A549 (cell line): ENCODE measurements at regions of chr2 and their contacts with region 1.

Region 1: DNA sequence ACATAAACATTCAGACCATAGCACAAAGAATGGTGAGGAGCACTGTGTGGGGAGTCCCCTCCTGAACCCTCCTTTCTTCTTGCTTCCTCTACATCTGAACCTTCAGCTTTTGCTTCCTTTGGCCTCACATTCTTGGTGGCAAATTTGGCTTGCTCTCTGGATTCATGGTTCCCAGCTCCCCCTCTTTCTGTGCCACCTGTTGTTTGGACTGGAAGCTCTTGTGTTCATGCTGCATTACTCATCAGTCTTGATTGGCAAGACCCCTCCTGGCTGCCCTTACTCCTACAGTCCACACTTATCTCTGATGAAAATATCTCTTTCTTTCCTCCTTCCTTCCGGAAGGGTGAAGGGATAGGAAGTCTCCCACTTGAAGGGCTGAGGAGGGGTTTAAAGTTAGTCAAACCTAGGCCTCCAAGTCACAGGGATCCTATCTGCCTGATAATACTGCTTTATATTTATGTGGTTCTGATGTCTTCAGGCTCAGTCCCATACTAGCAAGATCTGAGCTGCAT is 70.0 kb downstream of the MYO3B start:
- DNase-seq: no peak
- ATAC-seq: no peak
- H3K4me3 ChIP-seq: no peak overlapping the region
- H3K27ac ChIP-seq: no peak overlapping the region
- H3K4me1 ChIP-seq: no peaks in the 10 kb centered on the region
- CTCF ChIP-seq: no peak
- EP300 ChIP-seq: no peak
- POLR2A ChIP-seq: no peak
- RAD21 ChIP-seq: no peak

Region 2: DNA sequence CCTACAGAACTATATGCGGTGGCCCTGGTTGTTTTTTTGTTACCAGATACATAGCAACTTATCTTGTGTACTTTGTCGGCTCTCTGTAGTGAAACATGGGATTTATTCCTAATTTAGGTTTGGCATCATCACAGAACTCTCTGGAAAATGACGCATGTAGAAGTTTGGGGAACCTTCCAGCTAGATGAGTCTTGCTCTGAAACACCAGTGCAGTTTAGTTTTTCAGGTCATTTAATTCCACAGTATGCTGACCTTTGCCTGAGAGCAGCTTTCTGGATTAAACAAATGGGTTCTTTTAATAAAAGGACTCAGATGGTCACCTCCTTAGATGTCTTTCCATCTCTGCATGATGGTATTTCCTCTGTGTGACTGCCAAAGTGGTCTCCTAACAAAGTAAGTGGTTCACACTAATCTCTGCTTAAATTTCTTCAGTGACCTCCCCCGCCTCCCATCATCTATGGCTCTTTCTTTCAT is 30.1 kb before region 1 on chr2:
- CTCF ChIA-PET with region 1: no interaction called
- POLR2A ChIA-PET with region 1: no interaction called
- DNase-seq: no peak
- ATAC-seq: no peak
- H3K4me3 ChIP-seq: no peak overlapping the region
- H3K27ac ChIP-seq: no peak overlapping the region
- H3K4me1 ChIP-seq: peaks cover 7% of the 10 kb centered on the region; the same call in 2 of the 3 replicates
- CTCF ChIP-seq: no peak
- EP300 ChIP-seq: no peak
- POLR2A ChIP-seq: no peak
- RAD21 ChIP-seq: no peak

Region 3: DNA sequence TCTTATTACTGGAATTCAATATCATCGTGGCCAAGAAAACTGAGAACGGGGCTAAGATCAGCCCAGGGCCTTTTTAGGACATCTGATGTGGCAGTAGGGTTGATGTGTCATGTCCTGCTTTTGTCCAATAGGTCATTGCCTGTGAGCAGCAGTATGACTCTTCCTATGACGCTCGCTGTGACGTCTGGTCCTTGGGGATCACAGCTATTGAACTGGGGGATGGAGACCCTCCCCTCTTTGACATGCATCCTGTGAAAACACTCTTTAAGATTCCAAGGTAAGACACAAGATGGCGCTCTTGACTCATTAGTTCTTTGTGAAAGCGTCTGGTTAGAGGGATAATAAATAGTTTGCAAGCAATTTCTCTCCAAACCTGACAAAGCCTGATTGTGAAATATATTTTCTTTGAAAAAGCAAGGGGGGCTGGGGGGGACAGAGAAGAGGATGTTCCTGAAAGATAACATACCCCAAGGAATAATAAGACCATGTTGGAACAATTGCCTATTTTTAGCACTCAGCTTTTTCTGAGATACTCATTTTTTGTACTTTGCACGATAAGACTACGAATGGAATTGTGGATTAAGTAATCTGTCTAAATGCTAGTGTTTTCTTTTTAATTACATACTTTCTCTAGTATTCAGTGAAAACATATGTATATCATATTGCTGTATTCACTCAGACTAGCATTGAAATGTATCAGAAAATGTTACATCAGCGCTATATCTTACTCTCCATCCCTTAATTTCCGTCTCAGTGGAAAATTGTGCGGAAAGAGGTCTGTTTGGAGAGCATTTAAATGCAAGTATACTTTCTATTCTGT is 11.9 kb before region 1 on chr2:
- CTCF ChIA-PET with region 1: interaction called, 10 read pairs
- POLR2A ChIA-PET with region 1: no interaction called
- DNase-seq: peak; percentile 16 to 61
- ATAC-seq: peak; percentile 57 to 86; a peak in 4 of 6 replicates
- H3K4me3 ChIP-seq: no peak overlapping the region
- H3K27ac ChIP-seq: no peak overlapping the region
- H3K4me1 ChIP-seq: no peaks in the 10 kb centered on the region
- CTCF ChIP-seq: peak; percentile 69
- EP300 ChIP-seq: no peak
- POLR2A ChIP-seq: no peak
- RAD21 ChIP-seq: peak; percentile 77 to 80